ENCODE measurements at regions of chr1 and their contacts with region 1.

Region 1: GRCh38 chr1:15820478-15820877 is 13.0 kb upstream of the UQCRHL start:
- DNase-seq: no peak
- ATAC-seq: no peak
- H3K4me3 Mint-ChIP-seq: no peak overlapping the region
- H3K27ac Mint-ChIP-seq: no peak overlapping the region
- H3K4me1 Mint-ChIP-seq: peaks cover 3% of the 10 kb centered on the region
- H3K27me3 Mint-ChIP-seq: no peaks in the 10 kb centered on the region
- CTCF ChIP-seq: no peak

Region 2: GRCh38 chr1:15803354-15803753 is 17.1 kb before region 1 on chr1:
- CTCF ChIA-PET with region 1: interaction called, 32 read pairs
- POLR2A ChIA-PET with region 1: interaction called, 3 read pairs
- DNase-seq: peak; percentile 36
- ATAC-seq: peak; percentile 54
- H3K4me3 Mint-ChIP-seq: no peak overlapping the region
- H3K27ac Mint-ChIP-seq: no peak overlapping the region
- H3K4me1 Mint-ChIP-seq: peaks cover 19% of the 10 kb centered on the region
- H3K27me3 Mint-ChIP-seq: no peaks in the 10 kb centered on the region; the same call in 1 of the 2 replicates
- CTCF ChIP-seq: no peak; the same call in 1 of the 2 replicates

Region 3: GRCh38 chr1:15866721-15867201 is 46.3 kb after region 1 on chr1:
- CTCF ChIA-PET with region 1: interaction called, 11 read pairs
- POLR2A ChIA-PET with region 1: no interaction called
- DNase-seq: no peak
- ATAC-seq: no peak
- H3K4me3 Mint-ChIP-seq: no peak overlapping the region
- H3K27ac Mint-ChIP-seq: no peak overlapping the region
- H3K4me1 Mint-ChIP-seq: peaks cover 9% of the 10 kb centered on the region
- H3K27me3 Mint-ChIP-seq: no peaks in the 10 kb centered on the region
- CTCF ChIP-seq: no peak

Region 4: DNA sequence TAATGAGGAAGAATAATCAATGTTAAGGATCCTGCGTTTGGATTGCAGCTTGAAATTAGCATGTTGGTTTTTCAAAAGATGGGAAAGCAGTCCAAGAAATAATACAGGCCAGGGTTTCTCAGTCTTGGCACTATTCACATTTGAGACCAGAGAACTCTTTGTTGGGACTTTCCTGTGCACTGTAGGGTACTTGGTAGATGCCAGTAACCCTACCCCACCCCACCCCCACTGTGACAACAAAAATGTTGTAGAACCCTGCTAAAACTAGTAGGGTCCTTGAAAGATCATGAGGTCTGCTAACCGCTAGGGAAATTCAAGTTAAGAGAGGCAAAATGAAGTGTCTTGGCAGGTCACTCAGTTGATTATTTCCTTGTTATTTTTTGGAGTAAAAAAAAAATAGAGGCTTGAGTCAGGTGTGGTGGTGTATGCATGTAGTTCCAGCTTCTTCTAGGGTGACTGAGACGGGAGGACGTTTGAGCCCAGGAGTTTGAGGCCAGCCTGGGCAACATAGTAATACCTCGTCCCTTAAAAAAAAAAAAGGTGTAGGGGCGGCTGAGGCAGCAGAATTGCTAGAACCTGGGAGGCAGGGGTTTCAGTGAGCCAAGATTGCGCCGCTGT is 80.3 kb after region 1 on chr1:
- CTCF ChIA-PET with region 1: interaction called, 16 read pairs
- POLR2A ChIA-PET with region 1: no interaction called
- DNase-seq: no peak
- ATAC-seq: peak; percentile 32
- H3K4me3 Mint-ChIP-seq: no peak overlapping the region
- H3K27ac Mint-ChIP-seq: peak overlapping the region; percentile 97
- H3K4me1 Mint-ChIP-seq: peaks cover 18% of the 10 kb centered on the region
- H3K27me3 Mint-ChIP-seq: no peaks in the 10 kb centered on the region
- CTCF ChIP-seq: no peak

Region 5: DNA sequence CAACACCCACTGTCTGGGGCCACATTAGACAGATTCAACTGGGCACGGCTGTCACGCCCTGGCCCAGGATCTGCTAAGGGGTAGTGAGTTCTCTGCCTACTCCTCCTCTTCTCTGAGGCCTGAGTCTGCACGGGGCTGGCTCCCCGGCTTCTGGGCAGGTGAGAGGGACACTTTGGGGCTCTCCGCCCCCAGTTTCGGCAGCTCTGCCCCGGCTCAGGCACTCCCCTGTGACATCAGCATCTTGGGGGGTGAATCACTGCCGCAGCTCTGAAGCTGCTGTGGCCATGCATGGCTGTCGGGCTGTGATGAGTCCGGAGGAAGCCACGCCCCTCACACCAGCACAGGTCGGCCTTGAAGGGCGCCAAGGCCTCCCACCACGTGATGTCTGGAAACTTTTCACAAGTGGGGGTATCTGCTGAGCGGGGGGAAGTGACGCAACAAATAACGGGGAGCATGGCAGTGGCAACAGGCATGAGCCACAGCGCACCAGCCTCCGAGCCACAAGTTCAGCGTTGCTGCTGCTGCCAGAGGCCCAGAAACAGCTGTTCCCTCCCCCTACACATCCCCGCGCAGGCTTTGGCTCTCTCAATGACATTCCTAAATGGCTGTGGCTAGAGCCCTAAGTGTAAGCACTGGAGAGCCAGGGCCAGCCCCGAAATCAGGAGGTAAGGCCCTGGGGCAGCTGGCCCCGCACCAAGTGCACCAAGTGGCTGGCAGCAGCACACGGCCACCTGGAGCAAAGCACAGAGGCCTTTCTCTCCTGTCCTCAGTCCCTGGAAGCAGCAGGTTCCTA is 129.2 kb after region 1 on chr1:
- CTCF ChIA-PET with region 1: interaction called, 17 read pairs
- POLR2A ChIA-PET with region 1: no interaction called
- DNase-seq: peak; percentile 55
- ATAC-seq: peak; percentile 52
- H3K4me3 Mint-ChIP-seq: no peak overlapping the region
- H3K27ac Mint-ChIP-seq: peak overlapping the region; percentile 87
- H3K4me1 Mint-ChIP-seq: peaks cover 63% of the 10 kb centered on the region
- H3K27me3 Mint-ChIP-seq: no peaks in the 10 kb centered on the region
- CTCF ChIP-seq: no peak

Region 6: GRCh38 chr1:16048573-16049189 is 228.2 kb after region 1 on chr1:
- CTCF ChIA-PET with region 1: interaction called, 10 read pairs
- POLR2A ChIA-PET with region 1: no interaction called
- DNase-seq: peak; percentile 98
- ATAC-seq: peak; percentile 95
- H3K4me3 Mint-ChIP-seq: peak overlapping the region; percentile 69
- H3K27ac Mint-ChIP-seq: no peak overlapping the region
- H3K4me1 Mint-ChIP-seq: peaks cover 13% of the 10 kb centered on the region
- H3K27me3 Mint-ChIP-seq: peaks cover 8% of the 10 kb centered on the region
- CTCF ChIP-seq: no peak